Naive thymus-derived CD4-positive, alpha-beta T cell (primary cell): ENCODE measurements at regions of chr6 and their contacts with region 1.

Region 1: DNA sequence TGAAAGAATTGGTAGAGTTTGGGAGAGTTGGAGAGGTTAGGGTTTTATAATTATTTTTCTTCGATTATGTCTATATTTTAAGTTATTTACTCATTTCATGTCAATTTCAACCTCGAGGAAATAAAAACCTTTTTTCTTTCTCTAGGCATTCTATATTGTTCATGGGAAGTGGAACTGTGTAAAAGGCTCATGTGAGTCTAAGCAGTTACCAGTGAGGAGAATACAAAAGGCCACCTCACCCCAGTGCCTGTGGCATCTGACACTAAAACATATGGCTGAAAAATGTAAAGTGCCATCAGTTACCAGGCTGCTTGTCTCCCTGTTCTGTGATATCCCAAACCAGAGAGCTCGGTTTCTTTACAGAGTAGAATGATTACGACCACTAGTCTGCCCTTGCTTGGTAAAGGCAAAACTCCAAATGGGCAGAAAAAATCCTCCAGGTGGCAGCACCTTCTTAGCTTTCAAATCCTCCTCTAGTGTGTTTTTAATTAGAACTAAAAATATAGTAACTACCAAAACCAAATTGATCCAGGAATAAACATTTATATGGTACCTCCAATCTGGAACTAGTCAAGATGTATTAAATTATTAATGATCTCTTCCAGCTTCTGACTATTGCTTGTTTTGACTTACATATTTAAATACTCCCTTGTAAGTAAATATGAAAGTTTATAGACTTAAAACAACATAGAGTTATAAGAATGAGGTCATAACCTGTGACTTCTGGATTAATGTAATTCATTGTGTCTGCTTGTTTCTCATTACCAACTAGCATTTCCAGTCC is 122.6 kb upstream of the MCHR2 start:
- DNase-seq: no peak
- ATAC-seq: no peak
- H3K4me3 ChIP-seq: no peak overlapping the region
- H3K4me3 Mint-ChIP-seq: no peak overlapping the region
- H3K27ac ChIP-seq: no peak overlapping the region
- H3K27ac Mint-ChIP-seq: no peak overlapping the region
- H3K4me1 ChIP-seq: no peaks in the 10 kb centered on the region
- H3K4me1 Mint-ChIP-seq: no peaks in the 10 kb centered on the region
- H3K27me3 ChIP-seq: no peaks in the 10 kb centered on the region
- H3K27me3 Mint-ChIP-seq: peaks cover 0 to 23% (median 12%) of the 10 kb centered on the region in 5 donors

Region 2: DNA sequence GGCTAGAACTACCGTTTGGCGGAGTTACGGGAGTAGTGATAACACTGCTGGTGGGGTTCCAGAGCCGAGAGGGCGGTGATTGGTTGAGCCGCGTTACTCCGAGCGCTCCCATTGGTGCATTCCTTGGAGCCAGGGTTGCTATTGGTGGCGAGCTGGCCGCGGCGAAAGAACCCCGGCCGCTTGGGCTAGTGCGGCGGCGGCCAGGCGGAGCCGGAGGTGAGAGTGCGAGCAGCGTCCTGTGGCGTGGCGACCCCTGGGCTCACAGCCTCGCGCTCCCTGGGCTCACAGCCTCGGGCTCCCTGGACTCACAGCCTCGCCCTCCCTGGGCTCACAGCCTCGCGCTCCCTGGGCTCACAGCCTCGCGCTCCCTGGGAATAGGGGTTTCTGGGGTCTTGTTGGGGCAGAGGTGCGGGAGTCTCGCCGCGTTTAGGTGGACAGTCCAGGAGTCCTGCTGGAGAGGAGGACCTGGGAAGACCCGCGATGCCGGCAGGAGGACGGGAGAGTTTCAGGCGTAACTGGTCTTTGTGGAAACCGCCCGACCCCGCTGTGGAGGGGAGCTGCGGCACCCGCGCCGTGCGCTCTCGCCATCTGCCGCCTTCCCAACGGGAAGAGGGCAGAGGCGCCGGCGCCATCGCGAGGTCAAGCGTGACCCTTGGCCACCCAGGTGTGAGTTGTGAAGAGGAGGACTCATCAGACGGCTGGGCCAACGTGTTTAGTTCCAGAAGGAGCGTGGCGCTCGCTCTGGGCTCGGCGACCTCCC is 497.8 kb before region 1 on chr6:
- CTCF ChIA-PET with region 1: no interaction called
- POLR2A ChIA-PET with region 1: no interaction called
- intact Hi-C with region 1: no loop called
- DNase-seq: no peak
- ATAC-seq: no peak
- H3K4me3 ChIP-seq: no peak overlapping the region
- H3K4me3 Mint-ChIP-seq: no peak overlapping the region
- H3K27ac ChIP-seq: no peak overlapping the region
- H3K27ac Mint-ChIP-seq: no peak overlapping the region
- H3K4me1 ChIP-seq: peaks cover 10 to 13% of the 10 kb centered on the region in 2 donors
- H3K4me1 Mint-ChIP-seq: peaks cover 8 to 10% (median 10%) of the 10 kb centered on the region in 7 donors
- H3K27me3 ChIP-seq: peaks cover 33 to 55% of the 10 kb centered on the region in 2 donors
- H3K27me3 Mint-ChIP-seq: peaks cover 81 to 89% (median 86%) of the 10 kb centered on the region in 5 donors

Region 3: GRCh38 chr6:100160912-100161311 is 44.3 kb after region 1 on chr6:
- CTCF ChIA-PET with region 1: no interaction called
- POLR2A ChIA-PET with region 1: no interaction called
- intact Hi-C with region 1: no loop called
- DNase-seq: no peak
- ATAC-seq: no peak
- H3K4me3 ChIP-seq: no peak overlapping the region
- H3K4me3 Mint-ChIP-seq: no peak overlapping the region
- H3K27ac ChIP-seq: no peak overlapping the region
- H3K27ac Mint-ChIP-seq: no peak overlapping the region
- H3K4me1 ChIP-seq: no peaks in the 10 kb centered on the region
- H3K4me1 Mint-ChIP-seq: no peaks in the 10 kb centered on the region
- H3K27me3 ChIP-seq: no peaks in the 10 kb centered on the region
- H3K27me3 Mint-ChIP-seq: peaks cover 0 to 15% (median 10%) of the 10 kb centered on the region in 5 donors

Region 4: DNA sequence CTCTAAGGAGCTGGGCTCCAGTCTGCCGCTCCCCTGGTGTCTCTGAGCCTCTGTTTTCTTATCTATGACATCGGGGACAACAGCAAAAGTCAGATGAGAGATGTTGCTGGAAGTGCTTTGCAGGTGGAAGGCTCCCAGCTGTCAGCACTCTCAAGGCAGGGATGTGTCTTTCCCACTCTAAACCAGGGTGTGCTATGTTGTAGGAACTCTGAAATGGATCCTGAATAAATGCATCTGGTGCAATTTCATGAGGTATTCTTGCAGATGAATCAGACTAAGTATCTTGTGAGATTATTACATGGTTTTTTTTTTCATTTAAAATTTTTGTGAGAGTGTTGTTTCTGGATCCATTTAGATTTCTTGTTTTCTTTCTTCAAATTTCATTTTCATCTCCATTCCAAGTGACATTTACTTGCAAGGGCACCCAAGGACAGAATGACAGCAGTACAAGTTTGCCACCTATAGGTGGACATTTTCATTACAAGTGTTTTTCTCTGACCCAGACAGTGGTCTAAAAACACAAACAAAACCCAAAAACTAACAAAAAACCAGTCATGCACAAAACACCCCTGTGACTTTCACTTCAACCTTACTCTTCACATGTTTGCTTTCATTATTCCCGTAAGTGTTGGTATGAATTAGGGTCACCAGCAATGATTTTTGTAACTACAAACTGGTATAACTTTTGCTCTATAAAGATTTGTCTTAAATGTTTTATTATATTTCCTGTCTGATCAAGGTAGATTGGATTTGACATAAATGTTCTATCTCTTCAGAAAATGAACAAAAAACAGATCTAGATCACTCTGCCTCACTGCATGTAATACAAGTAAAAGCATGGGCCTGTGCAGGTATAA is 362.8 kb after region 1 on chr6:
- CTCF ChIA-PET with region 1: no interaction called
- POLR2A ChIA-PET with region 1: no interaction called
- intact Hi-C with region 1: loop called (anchors 1 to 5 kb)
- DNase-seq: no peak
- ATAC-seq: peak; percentile 34
- H3K4me3 ChIP-seq: no peak overlapping the region
- H3K4me3 Mint-ChIP-seq: no peak overlapping the region
- H3K27ac ChIP-seq: no peak overlapping the region
- H3K27ac Mint-ChIP-seq: no peak overlapping the region
- H3K4me1 ChIP-seq: no peaks in the 10 kb centered on the region
- H3K4me1 Mint-ChIP-seq: no peaks in the 10 kb centered on the region
- H3K27me3 ChIP-seq: no peaks in the 10 kb centered on the region
- H3K27me3 Mint-ChIP-seq: peaks cover 26 to 37% (median 28%) of the 10 kb centered on the region in 5 donors

Region 5: GRCh38 chr6:100657678-100658330 is 541.2 kb after region 1 on chr6:
- CTCF ChIA-PET with region 1: no interaction called
- POLR2A ChIA-PET with region 1: no interaction called
- intact Hi-C with region 1: loop called in 1 of 2 experiments (anchors 1 kb)
- DNase-seq: peak in 1 of 9 donors; percentile 3
- ATAC-seq: no peak
- H3K4me3 ChIP-seq: no peak overlapping the region
- H3K4me3 Mint-ChIP-seq: no peak overlapping the region
- H3K27ac ChIP-seq: no peak overlapping the region
- H3K27ac Mint-ChIP-seq: no peak overlapping the region
- H3K4me1 ChIP-seq: no peaks in the 10 kb centered on the region
- H3K4me1 Mint-ChIP-seq: no peaks in the 10 kb centered on the region
- H3K27me3 ChIP-seq: no peaks in the 10 kb centered on the region
- H3K27me3 Mint-ChIP-seq: no peaks in the 10 kb centered on the region

Region 6: GRCh38 chr6:100664274-100665040 is 547.9 kb after region 1 on chr6:
- CTCF ChIA-PET with region 1: no interaction called
- POLR2A ChIA-PET with region 1: no interaction called
- intact Hi-C with region 1: loop called in 1 of 2 experiments (anchors 2 kb)
- DNase-seq: peak in 4 of 9 donors; percentile 4 to 27 (median 22)
- ATAC-seq: peak; percentile 59
- H3K4me3 ChIP-seq: no peak overlapping the region
- H3K4me3 Mint-ChIP-seq: no peak overlapping the region
- H3K27ac ChIP-seq: no peak overlapping the region
- H3K27ac Mint-ChIP-seq: peak overlapping the region in 5 of 9 donors; percentile 1 to 74 (median 22)
- H3K4me1 ChIP-seq: no peaks in the 10 kb centered on the region
- H3K4me1 Mint-ChIP-seq: peaks cover 0 to 12% (median 5%) of the 10 kb centered on the region in 7 donors
- H3K27me3 ChIP-seq: no peaks in the 10 kb centered on the region
- H3K27me3 Mint-ChIP-seq: no peaks in the 10 kb centered on the region

Region 7: GRCh38 chr6:100719883-100720682 is 603.5 kb after region 1 on chr6:
- CTCF ChIA-PET with region 1: no interaction called
- POLR2A ChIA-PET with region 1: no interaction called
- intact Hi-C with region 1: loop called in 1 of 2 experiments (anchors 1 kb)
- DNase-seq: no peak
- ATAC-seq: no peak
- H3K4me3 ChIP-seq: no peak overlapping the region
- H3K4me3 Mint-ChIP-seq: peak overlapping the region in 3 of 10 donors; percentile 17 to 30 (median 19)
- H3K27ac ChIP-seq: no peak overlapping the region
- H3K27ac Mint-ChIP-seq: peak overlapping the region in 3 of 9 donors; percentile 3 to 12 (median 10)
- H3K4me1 ChIP-seq: no peaks in the 10 kb centered on the region
- H3K4me1 Mint-ChIP-seq: peaks cover 5 to 16% (median 8%) of the 10 kb centered on the region in 7 donors
- H3K27me3 ChIP-seq: no peaks in the 10 kb centered on the region
- H3K27me3 Mint-ChIP-seq: no peaks in the 10 kb centered on the region

Region 8: DNA sequence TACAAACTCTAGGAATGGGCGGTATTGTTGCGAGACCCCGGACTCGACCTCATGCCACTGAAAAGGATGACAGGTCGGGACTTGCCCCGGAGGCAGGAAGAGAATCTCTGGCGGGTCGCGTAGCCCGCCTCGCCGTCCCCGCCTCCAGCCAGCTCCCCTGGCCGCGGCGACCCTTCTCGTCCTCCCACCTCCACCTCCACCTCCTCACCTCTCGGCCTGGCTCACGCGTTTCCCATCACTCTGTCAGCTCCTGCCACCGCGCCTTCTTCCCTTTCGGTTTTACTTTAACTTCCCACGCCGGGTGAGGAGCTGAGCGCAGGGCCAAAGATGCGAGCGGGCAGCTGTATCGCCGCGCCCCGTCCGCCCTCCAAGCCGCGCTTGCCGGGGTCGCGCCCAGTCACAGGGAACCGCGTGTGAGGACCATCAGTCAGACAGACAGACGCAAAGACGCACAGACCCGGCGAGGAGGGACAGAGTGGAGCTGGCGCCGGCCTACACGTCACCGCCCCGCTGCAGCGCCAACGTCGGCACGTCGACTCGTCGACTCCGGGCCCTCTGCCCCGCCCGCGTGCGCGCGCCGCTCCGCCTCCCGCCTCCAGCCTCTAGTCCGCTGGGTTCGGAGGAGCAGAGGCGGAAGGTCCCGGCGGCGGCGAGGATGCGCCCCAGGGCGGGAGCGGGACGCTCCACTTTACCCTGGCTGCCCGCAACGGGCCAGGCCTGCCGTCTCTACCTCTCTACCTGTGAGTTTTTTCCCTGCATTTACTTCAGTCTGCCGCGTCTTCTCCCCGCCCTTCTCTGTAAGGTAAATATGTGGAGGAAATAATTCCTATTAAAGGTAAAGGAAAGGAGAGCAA is 764.5 kb after region 1 on chr6 and contains the start of gene ASCC3:
- CTCF ChIA-PET with region 1: no interaction called
- POLR2A ChIA-PET with region 1: no interaction called
- intact Hi-C with region 1: loop called in 1 of 2 experiments (anchors 5 kb)
- DNase-seq: peak; percentile 80 to 93 (median 86)
- ATAC-seq: peak; percentile 98
- H3K4me3 ChIP-seq: peak within 1 kb of the TSS; percentile 85
- H3K4me3 Mint-ChIP-seq: peak within 1 kb of the TSS; percentile 97 to 100 (median 100)
- H3K27ac ChIP-seq: peak within 1 kb of the TSS; percentile 90
- H3K27ac Mint-ChIP-seq: peak within 1 kb of the TSS; percentile 95 to 100 (median 98)
- H3K4me1 ChIP-seq: peaks cover 24 to 27% of the 10 kb centered on the region in 2 donors
- H3K4me1 Mint-ChIP-seq: peaks cover 19 to 64% (median 50%) of the 10 kb centered on the region in 7 donors
- H3K27me3 ChIP-seq: no peaks in the 10 kb centered on the region
- H3K27me3 Mint-ChIP-seq: peaks cover 0 to 4% (median 3%) of the 10 kb centered on the region in 5 donors
- total RNA-seq, gene ASCC3: 40.7 to 73.8 (median 42.9) TPM